K562 (cell line): ENCODE measurements at regions of chr1 and their contacts with region 1.

Region 1: GRCh38 chr1:11858968-11859871 is 475 bp upstream of the NPPB start:
- DNase-seq: peak; percentile 89 to 97 (median 94)
- ATAC-seq: peak; percentile 99
- H3K4me3 ChIP-seq: no peak overlapping the region
- H3K27ac ChIP-seq: no peak overlapping the region
- H3K4me1 ChIP-seq: peaks cover 0 to 10% of the 10 kb centered on the region in 2 experiments; a peak in 2 of 5 replicates
- H3K27me3 ChIP-seq: peaks cover 40 to 45% of the 10 kb centered on the region in 2 experiments; a peak in 4 of 5 replicates
- CTCF ChIP-seq: peak; percentile 60 to 79 (median 69)
- EP300 ChIP-seq: no peak
- POLR2A ChIP-seq: no peak
- RAD21 ChIP-seq: peak in 1 of 2 experiments; percentile 46; a peak in 2 of 4 replicates

Region 2: GRCh38 chr1:11893907-11894251 is 34.7 kb after region 1 on chr1:
- CTCF ChIA-PET with region 1: interaction called, 3 read pairs
- POLR2A ChIA-PET with region 1: interaction called, 4 read pairs
- in situ Hi-C with region 1: no loop called
- intact Hi-C with region 1: loop called (anchors 2 kb)
- DNase-seq: peak; percentile 88 to 94 (median 93)
- ATAC-seq: peak; percentile 98
- H3K4me3 ChIP-seq: no peak overlapping the region
- H3K27ac ChIP-seq: no peak overlapping the region
- H3K4me1 ChIP-seq: peaks cover 6 to 24% of the 10 kb centered on the region in 2 experiments; a peak in 4 of 5 replicates
- H3K27me3 ChIP-seq: peaks cover 8 to 9% of the 10 kb centered on the region in 2 experiments; a peak in 4 of 5 replicates
- CTCF ChIP-seq: peak; percentile 97 to 99 (median 98)
- EP300 ChIP-seq: no peak
- POLR2A ChIP-seq: no peak
- RAD21 ChIP-seq: peak; percentile 97 to 100

Region 3: DNA sequence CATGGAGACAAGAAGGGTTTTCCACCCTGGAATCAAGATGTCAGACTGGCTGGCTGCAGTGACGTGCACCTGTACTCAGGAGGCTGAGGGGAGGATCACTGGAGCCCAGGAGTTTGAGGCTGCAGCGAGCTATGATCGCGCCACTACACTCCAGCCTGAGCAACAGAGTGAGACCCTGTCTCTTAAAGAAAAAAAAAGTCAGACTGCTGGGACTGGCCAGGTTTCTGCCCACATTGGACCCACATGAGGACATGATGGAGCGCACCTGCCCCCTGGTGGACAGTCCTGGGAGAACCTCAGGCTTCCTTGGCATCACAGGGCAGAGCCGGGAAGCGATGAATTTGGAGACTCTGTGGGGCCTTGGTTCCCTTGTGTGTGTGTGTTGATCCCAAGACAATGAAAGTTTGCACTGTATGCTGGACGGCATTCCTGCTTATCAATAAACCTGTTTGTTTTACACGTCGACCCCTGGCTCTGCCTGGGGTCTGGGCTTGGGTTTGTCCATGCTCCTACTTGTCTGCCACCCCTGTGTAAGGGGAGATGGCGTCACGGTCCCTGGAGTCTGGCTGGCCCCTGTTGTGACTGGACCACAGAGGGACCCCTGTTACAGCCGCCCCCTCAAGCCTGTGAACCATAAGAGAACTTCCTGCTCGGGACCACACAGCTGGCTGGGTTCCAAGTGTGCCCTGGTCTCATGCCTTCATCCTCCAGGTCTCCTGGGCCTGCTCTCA is 349.7 kb after region 1 on chr1:
- CTCF ChIA-PET with region 1: no interaction called
- POLR2A ChIA-PET with region 1: no interaction called
- in situ Hi-C with region 1: no loop called
- intact Hi-C with region 1: no loop called
- DNase-seq: peak; percentile 85 to 90 (median 87)
- ATAC-seq: peak; percentile 91
- H3K4me3 ChIP-seq: no peak overlapping the region
- H3K27ac ChIP-seq: no peak overlapping the region
- H3K4me1 ChIP-seq: peaks cover 3 to 17% of the 10 kb centered on the region in 2 experiments; a peak in 4 of 5 replicates
- H3K27me3 ChIP-seq: no peaks in the 10 kb centered on the region
- CTCF ChIP-seq: peak; percentile 94 to 97 (median 96)
- EP300 ChIP-seq: no peak; the same call in 1 of the 2 replicates
- POLR2A ChIP-seq: peak; percentile 66; the same call in 1 of the 2 replicates
- RAD21 ChIP-seq: peak; percentile 98 to 99